ENCODE measurements at regions of chr2 and their contacts with region 1.

Region 1: GRCh38 chr2:63698825-63699548 is 110.2 kb downstream of the MDH1 start:
- DNase-seq: no peak
- ATAC-seq: peak; percentile 64
- H3K4me3 Mint-ChIP-seq: no peak overlapping the region
- H3K27ac Mint-ChIP-seq: no peak overlapping the region
- H3K4me1 Mint-ChIP-seq: no peaks in the 10 kb centered on the region
- H3K27me3 Mint-ChIP-seq: no peaks in the 10 kb centered on the region
- CTCF ChIP-seq: no peak

Region 2: DNA sequence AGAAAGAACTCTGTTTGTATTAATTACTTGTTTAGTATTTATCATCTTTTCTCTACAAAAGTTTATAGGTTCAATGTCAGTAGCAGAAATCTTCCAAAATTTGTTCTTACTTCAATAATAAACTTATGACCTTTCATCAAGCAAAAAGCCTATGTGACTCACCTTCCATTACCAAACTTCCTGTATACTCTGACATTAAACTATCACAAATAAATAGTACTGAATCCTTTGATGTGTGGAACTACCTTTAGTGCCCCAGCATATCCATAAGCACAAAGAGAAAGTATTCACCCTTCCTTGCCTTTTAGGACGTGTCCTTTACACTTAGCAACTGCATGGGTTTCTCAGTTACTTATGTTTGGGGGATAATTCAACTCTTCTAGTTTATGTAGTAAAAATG is 827.5 kb before region 1 on chr2:
- CTCF ChIA-PET with region 1: no interaction called
- POLR2A ChIA-PET with region 1: no interaction called
- intact Hi-C with region 1: no loop called
- DNase-seq: no peak
- ATAC-seq: no peak
- H3K4me3 Mint-ChIP-seq: no peak overlapping the region
- H3K27ac Mint-ChIP-seq: no peak overlapping the region
- H3K4me1 Mint-ChIP-seq: no peaks in the 10 kb centered on the region
- H3K27me3 Mint-ChIP-seq: no peaks in the 10 kb centered on the region
- CTCF ChIP-seq: no peak

Region 3: DNA sequence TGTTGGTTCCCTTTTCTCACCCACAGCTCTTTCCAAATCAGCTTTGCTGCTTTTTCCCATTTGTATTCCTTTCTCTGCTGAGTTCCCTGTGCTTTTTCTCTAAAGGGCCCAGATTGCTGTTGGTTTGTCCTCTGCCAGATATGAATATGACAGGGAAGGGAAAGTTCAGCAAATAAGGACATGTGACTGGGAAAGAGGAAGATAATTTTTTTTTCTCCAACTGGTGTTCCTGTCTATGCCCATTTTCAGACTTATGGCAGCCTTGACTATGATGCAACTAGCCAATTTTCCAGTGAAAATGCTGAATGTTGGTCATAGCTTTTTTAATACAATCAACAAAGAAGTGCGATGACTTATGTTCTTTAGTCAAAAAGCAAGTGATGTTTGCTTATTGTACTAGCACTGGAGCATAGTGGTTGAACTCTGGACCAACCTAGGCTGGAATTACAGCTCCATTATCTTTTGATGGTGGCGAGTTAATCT is 102.5 kb before region 1 on chr2:
- CTCF ChIA-PET with region 1: no interaction called
- POLR2A ChIA-PET with region 1: no interaction called
- intact Hi-C with region 1: no loop called
- DNase-seq: no peak
- ATAC-seq: no peak
- H3K4me3 Mint-ChIP-seq: no peak overlapping the region
- H3K27ac Mint-ChIP-seq: no peak overlapping the region
- H3K4me1 Mint-ChIP-seq: peaks cover 2% of the 10 kb centered on the region
- H3K27me3 Mint-ChIP-seq: no peaks in the 10 kb centered on the region
- CTCF ChIP-seq: no peak

Region 4: DNA sequence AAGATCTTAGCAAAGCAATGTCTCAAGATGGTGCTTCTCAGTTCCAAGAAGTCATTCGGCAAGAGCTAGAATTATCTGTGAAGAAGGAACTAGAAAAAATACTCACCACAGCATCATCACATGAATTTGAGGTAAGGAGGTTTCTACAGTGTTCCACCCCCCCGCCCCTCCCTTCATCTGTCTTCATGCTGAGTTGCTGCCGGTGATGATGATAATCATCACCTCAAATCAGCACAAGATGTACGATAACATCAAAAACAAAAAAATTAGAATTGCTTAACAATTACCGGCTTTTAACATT is 157.3 kb after region 1 on chr2:
- CTCF ChIA-PET with region 1: interaction called, 101 read pairs
- POLR2A ChIA-PET with region 1: no interaction called
- intact Hi-C with region 1: loop called (anchors 1 kb)
- DNase-seq: no peak
- ATAC-seq: no peak
- H3K4me3 Mint-ChIP-seq: no peak overlapping the region
- H3K27ac Mint-ChIP-seq: peak overlapping the region; percentile 30
- H3K4me1 Mint-ChIP-seq: peaks cover 43% of the 10 kb centered on the region
- H3K27me3 Mint-ChIP-seq: no peaks in the 10 kb centered on the region
- CTCF ChIP-seq: no peak